Activated naive CD4-positive, alpha-beta T cell treated with anti-CD3 and anti-CD28 coated beads for 36 hours (primary cell): ENCODE measurements at regions of chr15 and their contacts with region 1.

Region 1: GRCh38 chr15:79970624-79971434 is at the start of gene BCL2A1:
- DNase-seq: peak; percentile 88
- H3K4me3 Mint-ChIP-seq: peak within 1 kb of the TSS; percentile 81
- H3K27ac Mint-ChIP-seq: peak within 1 kb of the TSS; percentile 95
- H3K4me1 Mint-ChIP-seq: peaks cover 42% of the 10 kb centered on the region
- H3K27me3 Mint-ChIP-seq: no peaks in the 10 kb centered on the region
- total RNA-seq, gene BCL2A1: 79.1 to 88.7 TPM

Region 2: DNA sequence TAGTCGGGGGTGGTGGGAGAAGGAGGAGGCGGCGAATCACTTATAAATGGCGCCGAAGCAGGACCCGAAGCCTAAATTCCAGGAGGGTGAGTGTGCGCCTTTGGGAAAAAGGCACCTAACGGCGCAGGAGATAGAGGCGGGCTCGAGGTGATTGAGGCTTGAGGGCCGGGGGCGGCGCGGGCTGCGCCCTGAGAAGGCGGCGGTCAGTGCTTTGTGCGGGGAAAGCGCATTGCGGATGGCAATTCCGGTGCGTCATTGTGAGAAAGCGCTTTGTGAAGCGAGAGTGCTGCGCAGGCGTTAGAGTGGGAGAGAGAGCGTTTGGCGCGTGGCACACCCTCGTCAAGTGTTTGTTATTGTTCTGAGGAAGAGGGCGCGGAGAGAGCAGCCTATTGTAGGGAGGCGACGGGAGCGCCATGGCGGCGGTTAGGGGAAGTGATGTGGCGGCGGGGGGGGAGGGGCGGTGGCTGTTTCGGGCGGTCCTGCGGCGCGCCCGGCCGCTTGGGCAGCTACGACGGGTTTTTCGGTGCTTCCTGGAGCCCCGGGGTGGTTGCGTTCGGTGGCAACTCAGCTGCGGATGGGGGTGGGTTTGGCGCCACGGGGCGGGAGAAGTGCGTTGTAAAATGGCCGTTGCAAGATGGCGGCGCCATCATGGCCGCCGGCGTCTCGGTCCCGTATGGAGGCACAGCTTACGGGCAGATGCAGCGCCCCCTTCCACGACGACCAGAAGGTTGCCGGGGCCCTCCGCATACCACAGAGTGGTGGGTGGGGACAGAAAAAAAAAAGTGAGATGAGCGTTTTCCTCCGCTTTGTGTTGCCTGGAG is 1097.6 kb before region 1 on chr15:
- CTCF ChIA-PET with region 1: no interaction called
- intact Hi-C with region 1: loop called (anchors 2 kb)
- DNase-seq: peak; percentile 92
- H3K4me3 Mint-ChIP-seq: peak overlapping the region; percentile 100
- H3K27ac Mint-ChIP-seq: peak overlapping the region; percentile 100
- H3K4me1 Mint-ChIP-seq: peaks cover 34% of the 10 kb centered on the region
- H3K27me3 Mint-ChIP-seq: no peaks in the 10 kb centered on the region

Region 3: DNA sequence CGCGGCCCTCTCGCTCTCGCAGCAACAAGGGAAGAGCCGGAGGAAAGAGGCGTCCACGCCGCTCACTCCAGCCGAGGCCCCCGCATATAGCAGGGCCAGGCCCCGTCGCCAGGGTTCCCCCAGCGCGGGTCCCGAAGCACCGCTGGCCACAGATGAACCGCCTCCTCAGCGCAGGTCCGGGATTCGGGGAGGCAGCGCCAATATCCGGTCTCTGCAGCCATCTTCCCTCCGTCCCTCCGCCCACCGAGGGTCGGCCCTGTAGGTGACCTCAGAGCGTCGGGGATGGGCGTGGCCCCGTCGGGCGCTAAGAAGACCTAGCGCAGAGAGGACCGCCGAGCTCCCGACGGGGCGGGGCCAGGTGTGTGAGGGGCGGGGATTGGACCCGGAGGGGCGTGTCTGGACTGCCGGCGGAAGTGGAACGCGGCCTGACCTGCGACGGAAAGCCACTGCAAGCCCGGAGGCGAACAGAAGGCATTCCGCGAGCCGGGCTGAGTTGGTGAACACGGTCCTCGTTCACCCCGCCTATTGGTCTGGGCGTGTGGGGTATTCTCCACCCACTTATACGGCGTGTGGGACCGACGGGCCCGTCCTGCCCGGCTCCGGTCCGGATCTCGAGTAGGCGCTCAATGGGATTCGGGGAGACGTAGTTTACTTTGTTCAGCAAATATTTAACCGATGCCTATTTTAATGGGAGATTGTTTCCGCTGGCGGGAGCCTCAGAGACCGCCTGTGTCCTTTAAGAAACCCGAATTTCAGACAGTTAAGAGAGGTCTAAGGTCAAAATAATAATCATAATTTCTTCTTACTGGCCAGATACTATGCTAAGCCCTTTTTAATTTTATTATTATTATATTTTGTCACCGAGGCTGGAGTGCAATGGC is 47.1 kb before region 1 on chr15:
- CTCF ChIA-PET with region 1: interaction called, 4 read pairs
- intact Hi-C with region 1: loop called (anchors 1 kb)
- DNase-seq: peak; percentile 99
- H3K4me3 Mint-ChIP-seq: peak overlapping the region; percentile 86
- H3K27ac Mint-ChIP-seq: peak overlapping the region; percentile 95
- H3K4me1 Mint-ChIP-seq: peaks cover 25% of the 10 kb centered on the region
- H3K27me3 Mint-ChIP-seq: no peaks in the 10 kb centered on the region

Region 4: DNA sequence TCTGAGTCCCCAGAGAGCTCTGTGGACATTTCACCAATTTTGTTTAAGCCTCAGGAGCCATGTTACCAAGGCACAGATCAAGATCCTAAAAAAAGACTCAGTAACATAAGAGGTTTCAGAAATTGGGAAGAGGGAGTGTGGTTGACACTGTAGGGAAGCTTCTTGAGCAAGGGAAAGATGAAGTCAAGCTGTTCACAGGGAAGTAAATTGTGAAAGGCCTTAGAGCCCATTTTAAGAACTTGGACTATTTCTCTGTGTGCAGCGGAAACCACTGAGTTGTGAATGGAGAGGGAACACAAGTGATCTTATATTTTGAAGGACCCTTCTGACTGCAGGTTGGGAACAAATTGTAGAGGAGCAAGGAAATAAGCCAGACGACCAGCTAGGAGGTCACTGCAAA is 18.5 kb before region 1 on chr15:
- CTCF ChIA-PET with region 1: no interaction called
- intact Hi-C with region 1: no loop called
- DNase-seq: no peak
- H3K4me3 Mint-ChIP-seq: no peak overlapping the region
- H3K27ac Mint-ChIP-seq: no peak overlapping the region
- H3K4me1 Mint-ChIP-seq: peaks cover 23% of the 10 kb centered on the region
- H3K27me3 Mint-ChIP-seq: no peaks in the 10 kb centered on the region

Region 5: GRCh38 chr15:79989682-79990081 is 18.9 kb after region 1 on chr15:
- CTCF ChIA-PET with region 1: interaction called, 17 read pairs
- intact Hi-C with region 1: loop called (anchors 1 kb)
- DNase-seq: no peak
- H3K4me3 Mint-ChIP-seq: no peak overlapping the region
- H3K27ac Mint-ChIP-seq: no peak overlapping the region
- H3K4me1 Mint-ChIP-seq: peaks cover 13% of the 10 kb centered on the region
- H3K27me3 Mint-ChIP-seq: no peaks in the 10 kb centered on the region

Region 6: GRCh38 chr15:80058851-80059785 is 88.3 kb after region 1 on chr15 and contains the start of gene ZFAND6:
- CTCF ChIA-PET with region 1: no interaction called
- intact Hi-C with region 1: loop called (anchors 1 kb)
- DNase-seq: peak; percentile 96
- H3K4me3 Mint-ChIP-seq: peak within 1 kb of the TSS; percentile 87
- H3K27ac Mint-ChIP-seq: peak within 1 kb of the TSS; percentile 89
- H3K4me1 Mint-ChIP-seq: peaks cover 27% of the 10 kb centered on the region
- H3K27me3 Mint-ChIP-seq: no peaks in the 10 kb centered on the region
- total RNA-seq, gene ZFAND6: 28.9 to 29.6 TPM

Region 7: DNA sequence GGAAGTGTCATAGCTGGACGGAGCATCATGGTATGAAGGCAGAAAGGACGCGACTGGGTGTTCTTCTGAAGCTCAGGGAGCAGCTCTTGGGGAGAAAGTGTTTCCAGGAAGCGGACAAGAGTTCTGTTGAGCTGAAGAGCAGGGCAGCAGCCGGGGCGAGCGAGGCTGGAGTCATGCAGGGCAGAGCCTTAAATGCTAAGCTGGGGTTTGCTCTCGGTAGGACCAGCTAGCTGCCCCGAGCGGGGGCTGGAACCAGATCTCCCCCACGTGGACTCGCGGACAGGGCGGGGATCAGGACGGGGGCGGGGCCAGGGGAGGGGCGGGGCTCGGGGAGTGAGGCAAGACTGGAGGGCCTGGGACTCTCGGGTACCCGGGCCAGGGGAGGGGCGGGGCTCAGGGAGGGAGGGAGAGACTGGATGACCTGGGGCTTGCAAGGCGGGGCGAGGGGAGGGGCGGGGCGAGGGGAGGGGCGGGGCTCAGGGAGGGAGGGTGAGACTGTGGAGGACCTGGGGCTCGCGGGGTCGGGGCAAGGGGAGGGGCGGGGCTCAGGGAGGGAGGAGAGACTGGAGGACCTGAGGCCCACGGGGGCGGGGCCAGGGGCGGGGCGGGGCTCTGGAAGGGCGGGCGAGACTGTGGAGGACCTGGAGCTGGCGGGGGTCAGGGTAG is 181.5 kb after region 1 on chr15:
- CTCF ChIA-PET with region 1: no interaction called
- intact Hi-C with region 1: loop called (anchors 2 kb)
- DNase-seq: peak; percentile 96
- H3K4me3 Mint-ChIP-seq: peak overlapping the region; percentile 87
- H3K27ac Mint-ChIP-seq: peak overlapping the region; percentile 36
- H3K4me1 Mint-ChIP-seq: peaks cover 19% of the 10 kb centered on the region
- H3K27me3 Mint-ChIP-seq: no peaks in the 10 kb centered on the region

Region 8: GRCh38 chr15:81296673-81297072 is 1325.8 kb after region 1 on chr15:
- CTCF ChIA-PET with region 1: no interaction called
- intact Hi-C with region 1: loop called (anchors 1 kb)
- DNase-seq: peak; percentile 90
- H3K4me3 Mint-ChIP-seq: peak overlapping the region; percentile 93
- H3K27ac Mint-ChIP-seq: peak overlapping the region; percentile 99
- H3K4me1 Mint-ChIP-seq: peaks cover 66% of the 10 kb centered on the region
- H3K27me3 Mint-ChIP-seq: no peaks in the 10 kb centered on the region